ENCODE measurements at regions of chr14 and their contacts with region 1.

Region 1: DNA sequence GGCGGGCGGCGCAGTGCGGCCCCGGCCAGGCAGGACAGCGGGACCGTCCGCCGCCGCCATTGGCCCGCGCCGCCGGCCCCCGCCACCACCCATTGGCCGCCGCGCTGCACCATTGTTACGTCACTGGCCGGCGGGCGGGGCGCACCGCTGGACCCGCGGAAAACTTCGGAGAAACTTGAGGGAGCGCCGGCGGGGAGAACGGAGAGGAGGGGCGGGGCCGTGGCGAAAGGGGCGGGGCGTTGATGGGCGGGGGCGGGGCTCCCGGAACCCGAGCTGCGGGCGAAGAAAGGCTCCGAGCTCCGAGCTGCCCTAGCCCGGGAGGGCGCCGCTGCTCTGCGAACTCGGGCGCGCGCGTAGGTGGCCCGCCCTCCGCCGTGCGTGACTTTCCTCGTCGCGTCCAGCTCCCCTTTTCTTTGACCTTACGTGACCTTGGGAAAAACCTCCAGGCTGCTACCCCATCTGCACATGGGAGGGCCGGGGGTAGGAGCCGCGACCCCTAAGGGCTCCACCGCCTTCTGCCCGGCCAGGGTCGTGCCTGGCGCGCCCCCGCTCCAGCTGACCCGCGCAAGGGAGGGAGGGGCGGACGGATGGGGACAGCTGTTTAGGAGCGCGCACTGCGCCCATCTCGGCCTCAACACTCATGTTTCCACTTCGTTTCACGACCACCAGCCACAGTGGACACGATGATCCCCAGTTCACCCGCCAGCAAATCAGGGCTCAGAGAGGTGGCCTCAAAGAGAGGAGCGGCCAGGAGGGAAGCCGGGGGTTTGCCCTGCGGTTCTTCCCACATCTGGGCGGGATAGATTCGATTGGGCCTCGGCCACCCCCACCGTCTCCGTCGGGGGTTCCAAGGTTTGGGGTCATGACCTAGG is at the start of gene ANKRD9:
- DNase-seq: peak; percentile 83
- H3K4me3 ChIP-seq: peak within 1 kb of the TSS; percentile 77
- H3K27ac ChIP-seq: no peak within 1 kb of the TSS
- H3K4me1 ChIP-seq: peaks cover 11% of the 10 kb centered on the region
- CTCF ChIP-seq: no peak
- total RNA-seq, gene ANKRD9: 1.1 and 1.2 TPM in 2 replicates

Region 2: GRCh38 chr14:102362545-102363181 is 147.3 kb before region 1 on chr14 and contains the starts of genes CINP and TECPR2:
- CTCF ChIA-PET with region 1: no interaction called
- POLR2A ChIA-PET with region 1: no interaction called
- intact Hi-C with region 1: loop called (anchors 10 kb)
- DNase-seq: peak; percentile 95
- H3K4me3 ChIP-seq: peak within 1 kb of the TSS; percentile 98
- H3K27ac ChIP-seq: peak within 1 kb of the TSS; percentile 5
- H3K4me1 ChIP-seq: peaks cover 21% of the 10 kb centered on the region
- CTCF ChIP-seq: no peak
- total RNA-seq, gene CINP: 28.2 and 37.7 TPM in 2 replicates
- total RNA-seq, gene TECPR2: 5.3 and 6.8 TPM in 2 replicates

Measured in OCI-LY7 (cell line).